ENCODE measurements at regions of chr2 and their contacts with region 1.

Region 1: DNA sequence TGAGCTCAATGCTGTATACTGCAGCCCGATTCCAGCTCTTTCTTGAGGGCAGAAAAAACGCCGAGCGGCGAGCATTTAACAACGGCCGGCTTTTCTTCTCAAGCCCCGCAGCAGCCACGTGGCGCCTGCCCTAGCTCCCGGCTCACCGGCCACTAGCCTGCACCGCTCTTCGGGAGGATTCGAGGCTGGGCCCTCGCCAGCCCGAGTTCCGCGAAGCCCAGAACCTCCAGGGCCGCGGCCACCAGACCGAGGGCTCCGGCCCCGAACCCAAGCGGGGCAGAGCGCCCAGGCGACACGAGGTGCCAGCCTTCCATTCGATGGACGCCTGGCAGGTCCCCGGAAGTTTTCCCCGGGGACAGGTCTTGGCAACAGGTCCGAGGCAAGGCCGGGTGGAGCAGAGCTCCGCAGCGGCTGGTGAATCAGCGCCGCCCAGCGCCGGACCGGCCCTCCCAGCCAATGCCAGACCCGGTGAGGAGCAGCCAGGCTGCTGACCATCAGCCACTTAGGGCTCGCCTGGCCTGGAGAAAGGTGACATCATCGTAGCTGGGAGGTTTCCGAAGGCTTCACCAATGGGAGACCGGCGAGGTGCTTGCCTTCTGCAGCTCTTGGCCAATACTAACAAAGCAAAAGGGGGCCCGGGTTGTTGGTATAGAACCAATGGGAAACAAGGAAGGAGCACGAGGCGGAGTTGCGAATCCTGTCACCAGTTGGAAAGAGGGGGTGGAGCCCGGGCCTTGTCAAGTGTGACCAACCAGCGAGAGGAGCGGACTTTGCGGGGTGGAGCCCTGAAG is 544 bp upstream of the MXD1 start:
- DNase-seq: no peak
- ATAC-seq: peak; percentile 91
- H3K4me3 Mint-ChIP-seq: peak overlapping the region; percentile 87
- H3K27ac Mint-ChIP-seq: peak overlapping the region; percentile 91
- H3K4me1 Mint-ChIP-seq: peaks cover 41% of the 10 kb centered on the region
- H3K27me3 Mint-ChIP-seq: no peaks in the 10 kb centered on the region
- CTCF ChIP-seq: no peak

Region 2: DNA sequence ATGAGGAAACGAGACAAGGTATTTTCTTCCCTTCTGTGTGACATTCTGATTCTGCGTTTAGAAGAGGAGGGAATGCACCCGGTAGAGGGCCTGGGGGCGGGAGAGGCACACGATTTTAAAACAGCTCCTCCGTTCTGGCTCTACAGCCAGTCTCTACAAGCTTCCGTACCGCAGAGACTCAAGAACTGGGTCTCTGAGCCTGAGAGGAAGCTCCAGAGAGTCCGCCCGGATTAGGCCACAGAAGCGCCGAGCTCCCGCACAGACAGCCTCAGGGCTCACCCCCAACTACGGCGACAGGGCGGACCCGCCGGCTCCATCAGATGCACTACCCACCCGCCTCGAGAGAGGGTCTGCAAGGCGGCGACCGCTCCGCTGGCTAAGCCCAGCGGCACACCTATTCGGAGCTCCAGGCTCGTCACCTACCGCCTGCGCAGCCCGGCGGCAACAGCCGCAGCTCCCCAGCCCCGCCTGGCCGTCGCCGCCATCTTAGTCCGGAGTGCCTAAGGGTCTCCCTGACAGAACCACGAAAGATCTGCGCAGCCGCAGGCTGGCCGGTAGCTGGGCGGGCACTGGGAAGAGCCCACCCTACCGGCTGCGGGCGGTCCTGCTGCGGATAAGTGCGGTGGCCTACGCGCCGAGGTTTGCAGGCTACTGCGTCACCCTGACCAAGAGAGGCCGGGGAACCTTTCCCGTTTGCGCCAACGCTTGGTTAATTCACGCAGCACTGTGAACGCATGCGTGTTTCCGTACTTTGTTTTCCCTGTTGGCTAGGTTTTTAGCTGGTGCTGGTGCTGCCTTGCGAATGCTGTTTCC is 477.2 kb before region 1 on chr2 and contains the start of gene NFU1:
- CTCF ChIA-PET with region 1: no interaction called
- POLR2A ChIA-PET with region 1: interaction called, 3 read pairs
- intact Hi-C with region 1: loop called (anchors 10 kb)
- DNase-seq: peak; percentile 85
- ATAC-seq: peak; percentile 95
- H3K4me3 Mint-ChIP-seq: peak within 1 kb of the TSS; percentile 96
- H3K27ac Mint-ChIP-seq: peak within 1 kb of the TSS; percentile 93
- H3K4me1 Mint-ChIP-seq: peaks cover 34% of the 10 kb centered on the region
- H3K27me3 Mint-ChIP-seq: no peaks in the 10 kb centered on the region
- CTCF ChIP-seq: no peak
- total RNA-seq, gene NFU1: 24.3 and 31.1 TPM in 2 replicates

Region 3: DNA sequence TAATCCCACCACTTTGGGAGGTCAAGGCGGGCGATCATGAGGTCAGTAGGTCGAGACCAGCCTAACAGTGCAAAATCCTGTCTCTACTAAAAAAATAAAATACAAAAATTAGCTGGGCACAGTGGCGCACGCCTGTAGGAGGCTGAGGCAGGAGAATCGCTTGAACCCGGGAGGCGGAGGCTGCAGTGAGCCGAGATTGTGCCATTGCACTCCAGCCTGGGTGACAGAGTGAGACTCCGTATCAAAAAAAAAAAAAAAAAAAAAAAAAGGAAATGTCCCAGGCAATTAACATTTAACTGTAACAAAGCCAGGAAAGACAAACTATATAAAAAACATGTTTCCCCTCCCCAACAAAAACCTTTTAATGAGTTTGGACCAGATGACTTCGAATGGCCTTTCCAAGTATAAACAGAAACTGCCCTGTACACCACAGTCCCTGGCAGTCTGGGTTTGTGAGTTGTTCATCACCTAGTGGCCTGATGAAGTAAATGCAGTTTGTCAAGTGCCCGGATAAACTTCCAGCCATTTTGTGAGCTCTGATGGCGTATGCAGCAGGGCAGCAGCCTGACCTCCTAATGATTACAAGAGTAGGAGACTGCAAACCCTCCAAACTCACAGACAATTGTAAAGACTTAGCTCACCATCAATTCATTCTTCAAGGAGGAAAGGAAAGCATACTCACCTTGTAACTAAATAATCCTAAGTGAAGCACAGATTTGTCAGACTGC is 156.3 kb after region 1 on chr2:
- CTCF ChIA-PET with region 1: interaction called, 27 read pairs
- POLR2A ChIA-PET with region 1: interaction called, 65 read pairs
- intact Hi-C with region 1: loop called (anchors 1 kb)
- DNase-seq: no peak
- ATAC-seq: peak; percentile 92
- H3K4me3 Mint-ChIP-seq: peak overlapping the region; percentile 64
- H3K27ac Mint-ChIP-seq: peak overlapping the region; percentile 83
- H3K4me1 Mint-ChIP-seq: peaks cover 32% of the 10 kb centered on the region
- H3K27me3 Mint-ChIP-seq: no peaks in the 10 kb centered on the region
- CTCF ChIP-seq: peak; percentile 33

Region 4: DNA sequence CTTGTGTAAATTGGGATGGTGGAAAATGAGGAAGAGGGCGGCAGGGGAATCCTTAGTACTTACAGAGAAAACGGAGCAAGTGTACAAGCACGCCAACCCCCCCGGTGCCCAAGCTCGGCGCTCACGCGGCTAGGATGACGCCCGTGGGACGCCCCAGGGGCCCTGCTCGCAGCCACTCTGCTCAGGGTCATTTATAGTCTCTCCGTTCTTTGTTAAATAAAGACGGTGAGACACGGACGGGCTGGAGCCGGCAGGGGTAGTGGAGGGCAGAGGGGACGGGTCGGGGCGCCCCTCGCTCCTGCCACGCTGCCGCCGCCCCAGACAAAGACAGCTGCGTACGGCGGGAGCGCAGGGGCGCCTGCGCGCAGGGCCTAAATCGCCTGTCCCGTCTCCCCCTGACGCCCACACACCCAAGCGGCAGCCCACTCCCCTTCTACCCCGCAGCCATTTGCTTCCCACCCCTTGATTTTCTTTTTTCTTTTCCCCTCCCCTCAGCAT is 210.7 kb after region 1 on chr2:
- CTCF ChIA-PET with region 1: interaction called, 6 read pairs
- POLR2A ChIA-PET with region 1: interaction called, 43 read pairs
- intact Hi-C with region 1: loop called (anchors 1 kb)
- DNase-seq: peak; percentile 76
- ATAC-seq: peak; percentile 66
- H3K4me3 Mint-ChIP-seq: peak overlapping the region; percentile 93
- H3K27ac Mint-ChIP-seq: peak overlapping the region; percentile 100
- H3K4me1 Mint-ChIP-seq: peaks cover 81% of the 10 kb centered on the region
- H3K27me3 Mint-ChIP-seq: no peaks in the 10 kb centered on the region
- CTCF ChIP-seq: no peak

Region 5: GRCh38 chr2:70190418-70191243 is 276.3 kb after region 1 on chr2 and contains the start of gene C2orf42:
- CTCF ChIA-PET with region 1: interaction called, 6 read pairs
- POLR2A ChIA-PET with region 1: interaction called, 125 read pairs
- intact Hi-C with region 1: loop called (anchors 1 kb)
- DNase-seq: peak; percentile 93
- ATAC-seq: peak; percentile 86
- H3K4me3 Mint-ChIP-seq: peak within 1 kb of the TSS; percentile 98
- H3K27ac Mint-ChIP-seq: peak within 1 kb of the TSS; percentile 100
- H3K4me1 Mint-ChIP-seq: peaks cover 17% of the 10 kb centered on the region
- H3K27me3 Mint-ChIP-seq: no peaks in the 10 kb centered on the region
- CTCF ChIP-seq: no peak
- total RNA-seq, gene C2orf42: 28.4 and 34.8 TPM in 2 replicates

Region 6: DNA sequence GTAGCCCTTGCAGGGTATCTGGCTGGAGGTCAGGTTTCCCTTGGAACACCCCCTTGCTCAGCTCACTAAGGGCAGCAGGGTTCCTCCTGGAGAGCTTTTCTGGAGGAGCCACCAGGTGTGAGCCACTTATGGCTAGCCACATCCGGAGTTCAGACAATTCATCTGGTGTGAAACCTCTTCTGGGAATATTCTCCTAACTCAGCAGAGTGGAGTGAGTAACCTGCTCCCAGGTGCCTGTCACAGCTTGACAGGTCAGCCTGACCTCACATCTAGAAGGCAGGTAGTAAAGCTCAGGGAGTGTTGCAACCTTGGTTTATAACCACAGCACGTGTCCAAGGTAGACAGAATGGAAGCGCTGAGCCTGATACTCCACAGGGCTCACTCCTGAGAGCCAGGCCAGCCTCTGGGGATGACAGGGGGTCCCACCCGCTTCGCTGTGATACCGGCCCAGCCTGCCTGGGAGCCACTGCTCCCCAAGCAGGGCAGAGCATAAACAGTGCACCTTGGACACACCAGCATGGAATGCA is 701.9 kb after region 1 on chr2:
- CTCF ChIA-PET with region 1: interaction called, 3 read pairs
- POLR2A ChIA-PET with region 1: no interaction called
- intact Hi-C with region 1: loop called (anchors 2 kb)
- DNase-seq: no peak
- ATAC-seq: no peak
- H3K4me3 Mint-ChIP-seq: no peak overlapping the region
- H3K27ac Mint-ChIP-seq: no peak overlapping the region
- H3K4me1 Mint-ChIP-seq: no peaks in the 10 kb centered on the region
- H3K27me3 Mint-ChIP-seq: peaks cover 8% of the 10 kb centered on the region
- CTCF ChIP-seq: no peak

Measured in activated B cell treated with CpG ODN at 0.5 μM for 24 hours (primary cell).